WTC11 (cell line): ENCODE measurements at regions of chr5 and their contacts with region 1.

Region 1: DNA sequence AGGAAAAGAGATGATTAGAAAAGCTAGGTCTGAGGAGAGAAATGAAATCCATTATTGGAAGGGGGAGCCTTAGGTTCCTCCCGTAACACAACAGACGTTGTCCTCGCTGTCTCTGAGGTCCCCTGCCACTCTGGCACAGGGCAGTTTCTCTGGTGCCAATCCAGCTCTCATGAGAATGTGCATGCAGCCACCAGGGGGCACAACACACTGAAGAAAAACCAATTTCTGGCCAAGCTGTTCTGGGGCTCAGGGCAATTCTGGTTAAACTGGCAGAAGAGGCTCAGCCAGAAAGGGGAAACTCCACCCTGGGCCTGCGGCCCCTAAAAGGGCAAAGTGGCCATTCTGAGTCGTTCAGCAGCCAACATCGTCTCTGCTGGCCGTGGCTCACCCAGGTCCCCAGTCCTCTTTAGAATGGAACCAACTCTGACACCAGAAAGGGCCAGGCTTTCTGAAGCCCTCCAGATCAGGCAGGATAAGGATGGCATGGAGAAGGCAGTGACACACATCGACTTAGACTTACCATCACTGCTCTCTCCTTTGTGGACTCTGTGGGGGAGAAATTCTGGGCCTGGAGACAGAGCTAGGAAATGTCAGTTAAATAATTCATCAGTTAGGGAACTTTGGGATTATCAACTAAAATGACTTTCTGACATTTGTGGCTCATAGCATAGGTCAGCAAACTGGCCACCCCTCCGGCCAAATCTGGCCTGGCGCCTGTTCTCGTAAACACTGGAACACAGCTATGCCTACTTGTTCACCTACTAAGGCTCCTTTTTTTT is 58.5 kb upstream of the GOLPH3 start:
- DNase-seq: peak; percentile 77
- ATAC-seq: peak; percentile 89
- H3K4me3 Mint-ChIP-seq: no peak overlapping the region
- H3K27ac Mint-ChIP-seq: 0 out of 2 replicates have a peak overlapping the region, but pooled peaks have one; percentile 7
- H3K4me1 Mint-ChIP-seq: peaks cover 4% of the 10 kb centered on the region; the same call in 1 of the 2 replicates
- H3K27me3 Mint-ChIP-seq: no peaks in the 10 kb centered on the region; the same call in 1 of the 2 replicates
- CTCF ChIP-seq: peak; percentile 78

Region 2: GRCh38 chr5:32174011-32174870 is 58.4 kb before region 1 on chr5 and contains the start of gene GOLPH3:
- CTCF ChIA-PET with region 1: interaction called, 11 read pairs
- POLR2A ChIA-PET with region 1: interaction called, 4 read pairs
- DNase-seq: peak; percentile 93
- ATAC-seq: peak; percentile 87
- H3K4me3 Mint-ChIP-seq: peak within 1 kb of the TSS; percentile 98
- H3K27ac Mint-ChIP-seq: peak within 1 kb of the TSS; percentile 98
- H3K4me1 Mint-ChIP-seq: peaks cover 28% of the 10 kb centered on the region
- H3K27me3 Mint-ChIP-seq: no peaks in the 10 kb centered on the region
- CTCF ChIP-seq: no peak
- total RNA-seq, gene GOLPH3: 88.7 to 101 TPM (median 95.4 TPM) in 3 replicates

Region 3: DNA sequence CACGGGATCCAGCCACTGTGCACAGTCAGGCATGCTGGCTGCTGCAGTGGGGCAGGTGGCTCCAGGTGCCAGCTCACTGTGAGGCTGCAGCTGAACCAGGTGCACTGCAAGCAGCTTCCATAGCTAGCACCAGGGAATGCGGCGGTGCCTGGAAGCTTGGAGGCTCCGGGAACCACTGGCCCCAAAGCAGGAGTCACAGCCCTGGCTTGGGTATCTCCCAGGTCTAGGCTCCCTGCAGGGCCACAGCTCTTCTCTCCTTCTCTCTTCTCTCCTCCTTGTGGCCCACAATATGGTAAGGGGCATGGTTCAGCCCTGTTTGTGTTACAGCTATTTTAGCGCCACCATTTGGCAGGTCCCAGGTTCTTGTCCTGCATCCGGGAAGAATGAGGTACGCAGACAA is 86.8 kb after region 1 on chr5:
- CTCF ChIA-PET with region 1: interaction called, 58 read pairs
- POLR2A ChIA-PET with region 1: interaction called, 3 read pairs
- DNase-seq: peak; percentile 54
- ATAC-seq: peak; percentile 87
- H3K4me3 Mint-ChIP-seq: no peak overlapping the region
- H3K27ac Mint-ChIP-seq: no peak overlapping the region
- H3K4me1 Mint-ChIP-seq: peaks cover 6% of the 10 kb centered on the region; the same call in 1 of the 2 replicates
- H3K27me3 Mint-ChIP-seq: no peaks in the 10 kb centered on the region
- CTCF ChIP-seq: no peak

Region 4: DNA sequence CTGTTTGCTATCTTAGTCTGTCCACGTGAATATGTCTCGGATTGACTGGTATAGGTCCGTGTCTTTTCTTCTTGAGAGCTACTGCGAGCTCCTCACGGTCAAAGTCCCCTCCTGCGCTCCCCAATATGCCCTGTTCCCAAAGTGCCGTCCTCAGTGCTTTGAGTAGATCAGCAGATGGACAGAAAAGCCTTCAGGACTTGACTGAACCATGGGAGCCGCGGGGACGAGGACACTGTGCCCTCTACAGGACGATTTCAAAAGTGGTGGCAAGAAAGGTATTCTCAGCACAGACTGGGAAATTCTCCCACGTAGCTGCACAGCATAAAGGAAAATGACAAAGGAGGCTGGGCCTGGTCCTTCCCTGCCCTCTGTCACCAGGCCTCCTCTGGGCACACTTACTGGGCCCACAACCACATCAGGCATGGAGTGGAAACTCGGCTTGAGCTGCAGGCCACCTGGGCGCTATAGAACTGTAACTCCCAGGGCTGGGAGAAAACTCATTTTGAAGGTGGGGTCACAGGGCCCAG is 96.7 kb after region 1 on chr5:
- CTCF ChIA-PET with region 1: interaction called, 49 read pairs
- POLR2A ChIA-PET with region 1: interaction called, 5 read pairs
- DNase-seq: peak; percentile 69
- ATAC-seq: peak; percentile 98
- H3K4me3 Mint-ChIP-seq: no peak overlapping the region
- H3K27ac Mint-ChIP-seq: peak overlapping the region; percentile 73; the same call in 1 of the 2 replicates
- H3K4me1 Mint-ChIP-seq: peaks cover 11% of the 10 kb centered on the region
- H3K27me3 Mint-ChIP-seq: no peaks in the 10 kb centered on the region
- CTCF ChIP-seq: peak; percentile 51; the same call in 1 of the 2 replicates

Region 5: GRCh38 chr5:32390819-32391591 is 158.4 kb after region 1 on chr5:
- CTCF ChIA-PET with region 1: no interaction called
- POLR2A ChIA-PET with region 1: no interaction called
- DNase-seq: no peak
- ATAC-seq: no peak
- H3K4me3 Mint-ChIP-seq: no peak overlapping the region
- H3K27ac Mint-ChIP-seq: no peak overlapping the region
- H3K4me1 Mint-ChIP-seq: no peaks in the 10 kb centered on the region
- H3K27me3 Mint-ChIP-seq: no peaks in the 10 kb centered on the region
- CTCF ChIP-seq: no peak